Activated CD4-positive, alpha-beta memory T cell treated with anti-CD3 and anti-CD28 coated beads for 36 hours (primary cell): ENCODE measurements at regions of chr6 and their contacts with region 1.

Region 1: DNA sequence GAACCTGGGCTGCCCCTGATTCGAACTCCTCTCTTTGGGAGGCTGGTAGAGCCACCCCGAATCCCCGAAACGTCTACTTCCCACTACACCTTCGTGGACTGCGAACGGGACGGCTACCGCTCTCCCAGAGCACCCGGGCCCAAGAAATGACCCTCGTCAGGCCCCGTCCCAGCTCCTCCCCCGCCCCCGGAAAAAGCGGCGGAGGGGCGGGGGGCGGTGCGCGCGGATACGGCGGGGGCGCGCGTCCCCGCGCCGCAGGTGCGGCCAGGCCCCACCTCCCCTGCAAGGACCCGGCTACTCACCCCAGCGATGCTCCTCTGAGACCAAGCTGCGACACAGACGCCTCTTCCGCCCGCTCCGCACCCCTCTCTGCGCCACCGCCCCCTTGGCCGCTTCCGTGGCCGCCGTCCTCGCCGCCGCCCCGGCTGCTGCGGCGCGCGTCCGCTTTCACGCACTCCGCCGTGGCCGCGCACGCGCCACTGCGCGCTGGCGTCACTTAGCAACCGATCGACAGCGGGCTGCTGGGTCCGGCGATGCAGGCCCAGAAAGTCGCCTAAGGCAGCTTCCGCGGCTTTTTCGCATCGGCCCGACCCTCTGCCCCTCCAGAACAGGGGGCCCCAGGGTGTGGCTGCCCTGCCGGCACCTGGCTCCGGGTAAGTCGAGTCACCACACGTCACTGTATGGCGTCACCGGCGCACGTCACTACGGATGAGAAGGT is at the start of gene BTBD9:
- DNase-seq: peak; percentile 87
- H3K4me3 Mint-ChIP-seq: peak within 1 kb of the TSS; percentile 88
- H3K27ac Mint-ChIP-seq: peak within 1 kb of the TSS; percentile 90
- H3K4me1 Mint-ChIP-seq: peaks cover 48% of the 10 kb centered on the region
- H3K27me3 Mint-ChIP-seq: no peaks in the 10 kb centered on the region
- total RNA-seq, gene BTBD9: 14.4 to 14.6 TPM

Region 2: DNA sequence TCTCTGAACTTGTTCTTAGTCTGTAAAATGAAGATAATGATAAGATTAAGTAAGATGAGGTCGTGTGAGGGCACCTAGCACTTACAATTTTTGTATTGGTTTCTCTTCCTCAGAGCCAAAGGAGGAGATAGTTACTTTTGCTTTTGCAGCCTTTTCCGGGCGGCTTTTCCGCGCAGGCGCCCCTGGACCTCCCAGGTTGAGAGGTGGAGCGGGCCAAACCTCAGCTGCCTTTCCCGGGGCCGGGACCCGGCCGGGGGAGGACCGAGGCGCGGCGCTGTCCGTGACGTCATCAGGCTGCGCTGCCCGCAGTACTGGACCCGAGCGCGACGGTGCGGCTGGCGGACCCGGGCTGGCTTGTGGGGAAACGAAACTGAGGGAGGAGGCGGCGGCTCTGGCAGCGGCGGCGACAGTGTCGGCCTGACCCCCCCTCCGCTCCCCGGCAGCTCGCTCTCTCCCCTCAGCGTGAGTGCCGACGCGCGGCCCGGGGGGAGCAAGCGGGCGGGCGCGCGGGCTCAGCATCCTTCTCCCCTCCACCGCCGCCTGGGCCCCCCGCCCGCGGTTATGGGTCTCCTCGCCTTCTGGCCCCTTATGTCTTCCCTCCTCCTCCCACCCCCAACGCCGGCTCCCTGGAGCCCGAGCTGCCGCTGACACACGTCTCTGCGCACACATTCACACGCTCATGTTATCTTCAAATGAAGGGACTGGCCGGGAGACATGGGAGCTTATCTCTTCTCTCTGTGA is 1206.6 kb before region 1 on chr6 and contains the start of gene CMTR1:
- CTCF ChIA-PET with region 1: no interaction called
- POLR2A ChIA-PET with region 1: no interaction called
- intact Hi-C with region 1: loop called (anchors 5 kb)
- DNase-seq: peak; percentile 98
- H3K4me3 Mint-ChIP-seq: peak within 1 kb of the TSS; percentile 91
- H3K27ac Mint-ChIP-seq: peak within 1 kb of the TSS; percentile 98
- H3K4me1 Mint-ChIP-seq: peaks cover 44% of the 10 kb centered on the region
- H3K27me3 Mint-ChIP-seq: peaks cover 2% of the 10 kb centered on the region
- total RNA-seq, gene CMTR1: 69.2 to 70.1 TPM

Region 3: GRCh38 chr6:38570750-38571149 is 68.9 kb before region 1 on chr6:
- CTCF ChIA-PET with region 1: interaction called, 5 read pairs
- POLR2A ChIA-PET with region 1: no interaction called
- intact Hi-C with region 1: loop called (anchors 1 kb)
- DNase-seq: no peak
- H3K4me3 Mint-ChIP-seq: no peak overlapping the region
- H3K27ac Mint-ChIP-seq: no peak overlapping the region
- H3K4me1 Mint-ChIP-seq: peaks cover 23% of the 10 kb centered on the region
- H3K27me3 Mint-ChIP-seq: no peaks in the 10 kb centered on the region

Region 4: GRCh38 chr6:38593409-38593808 is 46.2 kb before region 1 on chr6:
- CTCF ChIA-PET with region 1: no interaction called
- POLR2A ChIA-PET with region 1: no interaction called
- intact Hi-C with region 1: loop called (anchors 5 kb)
- DNase-seq: no peak
- H3K4me3 Mint-ChIP-seq: no peak overlapping the region
- H3K27ac Mint-ChIP-seq: peak overlapping the region; percentile 63
- H3K4me1 Mint-ChIP-seq: peaks cover 10% of the 10 kb centered on the region
- H3K27me3 Mint-ChIP-seq: no peaks in the 10 kb centered on the region

Region 5: DNA sequence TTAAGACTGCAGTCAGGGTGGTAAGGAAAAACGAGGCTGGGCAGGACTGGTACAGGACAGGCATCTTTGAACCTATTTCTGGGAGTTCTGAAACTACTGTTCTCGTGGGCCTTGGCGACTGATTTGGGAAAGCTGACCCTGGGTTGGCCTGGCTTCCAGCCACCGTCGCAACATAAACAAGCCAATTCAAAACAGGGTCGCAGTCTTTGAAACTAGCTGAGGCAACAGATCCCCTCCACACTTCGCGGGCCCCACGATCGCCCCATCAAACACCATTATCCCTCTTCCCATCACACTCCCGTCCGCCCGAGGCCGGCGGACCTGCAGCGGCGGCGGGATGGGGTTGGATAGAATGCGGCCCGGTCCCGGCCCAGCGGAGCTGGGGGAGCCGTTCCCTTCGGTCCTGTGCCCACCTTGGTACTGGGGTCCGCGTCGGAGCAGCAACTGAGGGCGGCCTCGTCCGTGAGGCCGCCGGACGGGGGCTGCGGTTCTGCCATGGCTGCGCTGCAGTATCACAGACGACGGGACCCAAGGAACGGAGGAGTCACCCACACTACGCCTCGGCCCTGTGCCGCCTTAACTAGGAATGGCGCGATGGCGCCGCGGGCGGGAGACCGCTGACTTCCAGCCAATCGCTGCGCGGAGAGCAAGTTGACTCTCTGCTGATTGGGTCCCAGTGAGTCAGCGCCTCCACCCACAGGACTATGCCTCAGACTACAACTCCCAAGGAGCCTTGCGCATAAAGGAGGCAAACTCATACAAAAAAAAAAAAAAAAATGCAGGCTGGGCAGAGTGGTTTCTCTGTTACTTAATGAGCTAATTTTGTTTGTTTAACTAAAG is 63.1 kb after region 1 on chr6 and contains the start of gene GLO1:
- CTCF ChIA-PET with region 1: no interaction called
- POLR2A ChIA-PET with region 1: no interaction called
- intact Hi-C with region 1: loop called (anchors 1 kb)
- DNase-seq: peak; percentile 98
- H3K4me3 Mint-ChIP-seq: peak within 1 kb of the TSS; percentile 82
- H3K27ac Mint-ChIP-seq: peak within 1 kb of the TSS; percentile 79
- H3K4me1 Mint-ChIP-seq: peaks cover 37% of the 10 kb centered on the region
- H3K27me3 Mint-ChIP-seq: peaks cover 9% of the 10 kb centered on the region
- total RNA-seq, gene GLO1: 132 to 133 TPM